ENCODE measurements at regions of chr4 and their contacts with region 1.

Region 1: GRCh38 chr4:14719053-14719452 is 283.2 kb upstream of the CPEB2 start:
- DNase-seq: peak in 1 of 2 donors; percentile 7
- ATAC-seq: peak in 4 of 8 donors; percentile 42 to 61 (median 52)
- H3K4me3 ChIP-seq: no peak overlapping the region
- H3K27ac ChIP-seq: peak overlapping the region in 2 of 10 donors; percentile 29 to 36
- H3K4me1 ChIP-seq: peaks cover 0 to 8% (median 0%) of the 10 kb centered on the region in 9 donors
- H3K27me3 ChIP-seq: no peaks in the 10 kb centered on the region
- CTCF ChIP-seq: no peak

Region 2: DNA sequence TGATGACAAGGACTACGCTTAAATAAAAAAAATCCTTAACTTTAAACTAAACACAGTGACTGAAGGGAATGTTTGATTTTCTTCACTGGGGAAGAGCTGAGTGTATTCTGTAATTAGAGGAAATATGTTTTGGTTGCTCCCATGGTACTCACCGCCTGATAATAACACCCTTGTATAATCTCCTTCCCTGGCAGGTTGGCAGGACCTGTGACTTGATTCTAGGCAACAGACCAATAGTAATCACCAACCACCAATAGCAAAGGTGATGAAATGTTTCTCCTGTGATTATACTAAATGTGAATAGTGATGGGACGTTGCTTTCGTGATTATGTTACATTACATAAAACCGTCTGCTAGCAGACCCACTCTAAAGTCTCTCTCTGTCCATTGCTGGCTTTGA is 253.5 kb before region 1 on chr4:
- intact Hi-C with region 1: loop called in 1 of 10 experiments (anchors 10 kb)
- DNase-seq: peak in 1 of 2 donors; percentile 36
- ATAC-seq: peak; percentile 74 to 99 (median 97)
- H3K4me3 ChIP-seq: no peak overlapping the region
- H3K27ac ChIP-seq: peak overlapping the region in 5 of 10 donors; percentile 17 to 61 (median 37)
- H3K4me1 ChIP-seq: peaks cover 0 to 8% (median 0%) of the 10 kb centered on the region in 9 donors
- H3K27me3 ChIP-seq: no peaks in the 10 kb centered on the region
- CTCF ChIP-seq: no peak

Region 3: DNA sequence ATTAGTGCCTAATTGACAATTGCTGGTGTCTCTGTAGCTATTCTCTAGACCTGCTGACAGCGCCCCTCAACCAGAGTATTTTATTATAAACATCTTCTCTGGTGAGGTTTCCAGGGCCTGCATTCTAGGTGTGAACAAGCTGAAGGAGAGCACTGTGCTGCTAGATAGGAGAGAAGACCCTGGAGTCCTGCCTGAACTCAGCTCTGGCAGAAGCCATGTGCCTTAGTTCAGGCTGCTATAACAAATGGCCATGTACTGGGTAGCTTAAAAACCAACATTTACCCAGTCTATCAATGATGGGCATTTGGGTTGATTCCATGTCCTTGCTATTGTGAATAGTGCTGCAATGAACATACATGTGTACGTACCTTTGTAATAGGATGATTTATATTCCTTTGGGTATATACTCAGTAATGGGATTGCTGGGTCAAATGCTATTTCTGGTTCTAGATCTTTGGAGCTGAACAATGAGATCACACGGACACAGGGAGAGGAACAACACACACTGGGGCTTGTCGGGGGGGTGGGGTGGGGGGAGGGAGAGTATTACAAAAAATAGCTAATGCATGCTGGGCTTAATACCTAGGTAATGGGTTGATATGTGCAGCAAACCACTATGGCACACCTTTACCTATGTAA is 97.7 kb after region 1 on chr4:
- intact Hi-C with region 1: no loop called
- DNase-seq: no peak
- ATAC-seq: peak in 1 of 8 donors; percentile 50
- H3K4me3 ChIP-seq: no peak overlapping the region
- H3K27ac ChIP-seq: no peak overlapping the region
- H3K4me1 ChIP-seq: peaks cover 0 to 17% (median 8%) of the 10 kb centered on the region in 9 donors
- H3K27me3 ChIP-seq: no peaks in the 10 kb centered on the region
- CTCF ChIP-seq: no peak

Measured in heart right ventricle (tissue), 16 donors.